ENCODE measurements at regions of chr16 and their contacts with region 1.

Region 1: GRCh38 chr16:1723450-1724147 is 17.6 kb downstream of the MAPK8IP3 start:
- DNase-seq: peak; percentile 57
- ATAC-seq: peak; percentile 43
- H3K4me3 Mint-ChIP-seq: no peak overlapping the region
- H3K27ac Mint-ChIP-seq: peak overlapping the region; percentile 48
- H3K4me1 Mint-ChIP-seq: peaks cover 43% of the 10 kb centered on the region
- H3K27me3 Mint-ChIP-seq: no peaks in the 10 kb centered on the region

Region 2: DNA sequence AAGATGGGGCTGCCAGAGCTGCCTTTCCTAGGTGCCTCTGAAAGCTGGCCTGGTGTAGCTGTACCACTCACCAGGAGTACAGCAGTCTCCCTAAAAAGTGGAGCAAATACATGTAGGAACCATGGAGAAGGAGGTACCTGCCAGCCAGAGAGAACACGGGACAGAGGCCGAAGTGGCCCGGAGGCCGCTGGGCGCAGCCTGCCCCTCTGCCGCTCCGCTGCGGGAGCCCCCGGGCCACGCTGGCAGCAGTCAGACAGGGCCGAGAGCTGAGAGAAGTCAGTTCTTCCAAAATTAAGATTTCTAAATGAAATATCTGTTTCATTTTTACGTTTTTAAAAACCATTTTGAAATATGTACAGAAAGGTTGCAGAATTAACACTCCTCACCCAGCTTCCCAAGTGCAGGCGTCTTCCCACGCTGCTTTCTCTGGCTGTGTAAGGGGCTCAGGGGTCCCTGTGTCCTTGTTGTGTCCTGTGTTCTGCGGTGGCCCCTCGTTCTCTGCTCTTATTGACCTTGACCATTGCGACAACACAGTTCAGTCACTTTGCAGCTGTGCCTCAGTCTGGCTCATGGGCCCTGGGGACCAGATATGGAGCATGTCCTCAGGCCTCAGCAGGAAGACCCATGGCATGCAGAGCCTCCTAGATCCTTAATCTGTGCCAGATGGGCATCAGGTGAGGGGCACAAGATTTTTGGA is 12.6 kb before region 1 on chr16:
- CTCF ChIA-PET with region 1: interaction called, 13 read pairs
- POLR2A ChIA-PET with region 1: interaction called, 4 read pairs
- DNase-seq: no peak
- ATAC-seq: no peak
- H3K4me3 Mint-ChIP-seq: no peak overlapping the region
- H3K27ac Mint-ChIP-seq: no peak overlapping the region
- H3K4me1 Mint-ChIP-seq: peaks cover 29% of the 10 kb centered on the region
- H3K27me3 Mint-ChIP-seq: no peaks in the 10 kb centered on the region